Ascending aorta (tissue), 2 donors: ENCODE measurements at regions of chr3 and their contacts with region 1.

Region 1: DNA sequence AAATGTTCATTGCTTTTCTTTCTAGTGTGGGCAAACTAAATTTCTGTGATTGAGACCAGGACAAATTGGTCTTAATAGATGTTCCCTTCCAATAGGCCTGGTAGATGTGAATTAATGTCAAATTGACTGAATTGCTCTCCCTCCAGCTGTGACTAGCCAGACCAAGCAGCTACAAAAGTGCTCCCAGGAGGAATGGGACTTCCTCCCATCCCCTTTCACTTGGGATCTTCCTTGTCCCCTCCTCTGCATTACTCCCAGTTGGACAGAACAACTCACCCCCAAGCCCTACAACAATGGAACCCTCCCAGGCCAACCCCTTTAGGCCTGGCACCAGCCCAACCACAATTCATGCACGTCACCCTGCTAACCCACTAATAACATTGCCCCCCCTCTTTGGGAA is 19.6 kb upstream of the ZKSCAN7 start:
- DNase-seq: no peak
- H3K4me3 ChIP-seq: no peak overlapping the region
- H3K27ac ChIP-seq: no peak overlapping the region
- H3K4me1 ChIP-seq: no peaks in the 10 kb centered on the region
- H3K27me3 ChIP-seq: no peaks in the 10 kb centered on the region
- CTCF ChIP-seq: no peak

Region 2: DNA sequence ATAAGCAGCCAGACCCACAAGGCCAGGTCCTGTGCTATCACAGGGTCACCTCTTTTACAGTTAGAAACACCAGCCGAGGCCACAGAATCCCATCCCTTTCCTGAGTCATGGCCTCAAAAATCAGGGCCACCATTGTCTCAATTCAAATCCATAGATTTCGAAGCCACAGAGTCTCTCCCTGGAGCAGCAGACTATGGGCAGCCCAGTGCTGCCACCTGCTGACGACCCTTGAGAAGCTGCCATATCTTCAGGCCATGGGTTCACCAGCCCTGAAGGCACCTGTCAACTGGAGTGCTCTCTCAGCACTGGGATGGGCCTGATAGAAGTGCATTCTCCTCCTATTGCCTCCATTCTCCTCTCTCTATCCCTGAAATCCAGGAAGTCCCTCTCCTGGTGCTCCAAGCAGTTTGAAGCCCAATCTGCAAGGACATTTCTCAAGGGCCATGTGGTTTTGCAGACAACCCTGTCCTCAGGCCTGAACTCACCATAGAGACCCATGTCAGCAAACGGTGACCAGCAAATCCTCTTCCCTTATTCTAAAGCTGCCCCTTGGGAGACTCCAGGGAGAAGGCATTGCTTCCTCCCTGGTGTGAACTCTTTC is 378.6 kb after region 1 on chr3:
- intact Hi-C with region 1: loop called (anchors 2 kb)
- DNase-seq: peak in 1 of 2 donors; percentile 71
- H3K4me3 ChIP-seq: no peak overlapping the region
- H3K27ac ChIP-seq: no peak overlapping the region
- H3K4me1 ChIP-seq: no peaks in the 10 kb centered on the region
- H3K27me3 ChIP-seq: no peaks in the 10 kb centered on the region
- CTCF ChIP-seq: peak; percentile 54 to 63 (median 62)